ENCODE measurements at regions of chr15 and their contacts with region 1.

Region 1: GRCh38 chr15:43329960-43330779 is at the start of gene LCMT2:
- DNase-seq: peak; percentile 91 to 94
- ATAC-seq: peak; percentile 95 to 98
- H3K4me3 ChIP-seq: peak within 1 kb of the TSS; percentile 75 to 98 (median 86)
- H3K27ac ChIP-seq: peak within 1 kb of the TSS; percentile 92 to 99 (median 94)
- H3K4me1 ChIP-seq: peaks cover 35 to 37% of the 10 kb centered on the region in 2 donors
- H3K27me3 ChIP-seq: no peaks in the 10 kb centered on the region
- CTCF ChIP-seq: peak in 4 of 5 experiments; percentile 7 to 44 (median 26)
- POLR2A ChIP-seq: peak; percentile 65 to 70
- total RNA-seq, gene LCMT2: 3.0 to 6.2 (median 5.3) TPM

Region 2: GRCh38 chr15:43105778-43106485 is 224.2 kb before region 1 on chr15 and contains the start of gene UBR1:
- in situ Hi-C with region 1: no loop called
- intact Hi-C with region 1: loop called (anchors 10 kb)
- DNase-seq: peak; percentile 82 to 90
- ATAC-seq: peak; percentile 92 to 94
- H3K4me3 ChIP-seq: peak within 1 kb of the TSS; percentile 69 to 98 (median 84)
- H3K27ac ChIP-seq: peak within 1 kb of the TSS; percentile 77 to 95 (median 90)
- H3K4me1 ChIP-seq: peaks cover 32 to 48% of the 10 kb centered on the region in 2 donors
- H3K27me3 ChIP-seq: no peaks in the 10 kb centered on the region
- CTCF ChIP-seq: no peak
- POLR2A ChIP-seq: peak; percentile 72 to 73
- total RNA-seq, gene UBR1: 20.2 to 31.3 (median 22.5) TPM

Region 3: DNA sequence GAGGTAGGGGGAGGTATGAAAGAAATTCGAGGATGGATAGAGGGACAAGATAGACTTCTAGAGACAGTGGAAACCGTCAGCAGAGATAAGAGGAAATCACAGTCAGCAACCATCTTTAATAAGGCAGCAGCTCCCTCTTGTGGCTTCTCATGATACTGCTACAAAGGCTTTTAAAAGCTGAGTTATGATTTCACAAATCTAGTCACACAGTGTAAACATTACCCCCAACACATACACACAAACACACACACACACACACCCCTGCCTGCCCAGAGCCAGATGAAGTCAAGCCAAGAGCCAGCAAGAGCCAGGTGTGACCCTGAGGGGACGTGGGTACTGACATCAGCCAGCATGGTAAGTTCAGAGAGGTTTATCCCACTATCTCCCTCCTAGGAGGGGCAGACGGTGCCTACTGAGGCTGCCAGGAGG is 44.5 kb before region 1 on chr15:
- in situ Hi-C with region 1: no loop called
- intact Hi-C with region 1: loop called (anchors 5 kb)
- DNase-seq: peak in 1 of 2 donors; percentile 32
- ATAC-seq: peak; percentile 78 to 92
- H3K4me3 ChIP-seq: no peak overlapping the region
- H3K27ac ChIP-seq: no peak overlapping the region
- H3K4me1 ChIP-seq: peaks cover 2 to 7% of the 10 kb centered on the region in 2 donors
- H3K27me3 ChIP-seq: no peaks in the 10 kb centered on the region
- CTCF ChIP-seq: peak; percentile 79 to 92 (median 90)
- POLR2A ChIP-seq: no peak

Region 4: GRCh38 chr15:43370975-43371974 is 41.1 kb after region 1 on chr15 and contains the starts of genes TUBGCP4 and ZSCAN29:
- in situ Hi-C with region 1: no loop called
- intact Hi-C with region 1: loop called (anchors 2 kb)
- DNase-seq: peak; percentile 52 to 77
- ATAC-seq: peak; percentile 94 to 95
- H3K4me3 ChIP-seq: peak within 1 kb of the TSS; percentile 80 to 97 (median 84)
- H3K27ac ChIP-seq: peak within 1 kb of the TSS; percentile 81 to 87 (median 85)
- H3K4me1 ChIP-seq: peaks cover 26 to 29% of the 10 kb centered on the region in 2 donors
- H3K27me3 ChIP-seq: no peaks in the 10 kb centered on the region
- CTCF ChIP-seq: peak in 4 of 5 experiments; percentile 7 to 60 (median 29)
- POLR2A ChIP-seq: peak in 1 of 2 donors; percentile 40
- total RNA-seq, gene TUBGCP4: 13.6 to 16.1 (median 14.7) TPM
- total RNA-seq, gene ZSCAN29: 20.7 to 42.2 (median 25.1) TPM

Region 5: GRCh38 chr15:43492673-43493601 is 162.8 kb after region 1 on chr15 and contains the start of gene TP53BP1:
- in situ Hi-C with region 1: loop called in 1 of 4 experiments (anchors 10 kb)
- intact Hi-C with region 1: no loop called
- DNase-seq: peak; percentile 96
- ATAC-seq: peak; percentile 98 to 99
- H3K4me3 ChIP-seq: peak within 1 kb of the TSS; percentile 85 to 99 (median 92)
- H3K27ac ChIP-seq: peak within 1 kb of the TSS; percentile 79 to 86 (median 84)
- H3K4me1 ChIP-seq: peaks cover 10 to 11% of the 10 kb centered on the region in 2 donors
- H3K27me3 ChIP-seq: no peaks in the 10 kb centered on the region
- CTCF ChIP-seq: no peak
- POLR2A ChIP-seq: no peak
- total RNA-seq, gene TP53BP1: 9.0 to 17.0 (median 13.3) TPM

Measured in gastrocnemius medialis (tissue), 4 donors.